Body of pancreas (tissue), 4 donors: ENCODE measurements at regions of chr2 and their contacts with region 1.

Region 1: DNA sequence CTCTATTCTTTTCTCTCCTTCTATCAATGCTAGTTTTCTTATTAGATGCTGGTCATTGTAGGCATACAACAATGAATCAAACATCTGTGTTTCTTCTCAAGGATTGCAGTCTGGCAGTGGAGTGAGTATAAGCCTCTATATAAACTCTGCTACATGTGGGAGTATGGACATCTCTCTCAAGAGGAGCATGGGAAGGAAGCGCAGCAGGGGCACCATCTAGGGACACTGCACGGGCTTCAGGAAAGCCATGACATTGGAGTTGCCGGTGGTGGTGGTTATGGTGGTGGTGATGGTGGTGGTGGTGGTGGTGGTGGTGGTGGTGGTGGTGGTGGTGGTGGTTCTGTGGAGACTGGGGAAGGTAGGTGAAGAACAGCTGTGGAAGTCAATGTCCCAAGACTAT is 462.6 kb downstream of the RNF144A start:
- DNase-seq: peak in 3 of 4 donors; percentile 43 to 81 (median 48)
- ATAC-seq: no peak
- H3K4me3 ChIP-seq: no peak overlapping the region
- H3K27ac ChIP-seq: no peak overlapping the region
- H3K4me1 ChIP-seq: peaks cover 12% of the 10 kb centered on the region
- H3K27me3 ChIP-seq: no peaks in the 10 kb centered on the region
- CTCF ChIP-seq: peak in 3 of 7 experiments; percentile 33 to 66 (median 41)
- POLR2A ChIP-seq: no peak

Region 2: DNA sequence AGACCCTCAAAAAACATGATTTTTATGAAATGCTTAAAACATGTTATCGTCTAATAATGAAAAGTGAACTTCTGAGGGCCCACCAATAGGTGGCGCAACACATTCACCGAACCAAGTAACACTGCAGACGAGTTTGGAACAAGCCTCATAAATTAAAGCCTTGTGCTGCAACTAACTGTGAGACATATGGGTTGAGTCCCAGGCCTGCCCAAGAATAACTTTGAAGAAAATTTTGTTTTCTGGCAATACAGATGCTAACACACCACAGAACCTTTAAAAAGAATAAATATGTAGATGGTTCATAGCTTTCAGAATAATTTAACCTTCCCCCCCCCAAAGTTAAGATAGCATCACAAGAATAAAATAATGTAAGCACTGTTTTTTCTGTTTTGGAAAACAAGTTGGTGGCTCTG is 176.7 kb before region 1 on chr2:
- intact Hi-C with region 1: loop called (anchors 10 kb)
- DNase-seq: peak; percentile 55 to 68 (median 60)
- ATAC-seq: peak; percentile 65
- H3K4me3 ChIP-seq: no peak overlapping the region
- H3K27ac ChIP-seq: no peak overlapping the region
- H3K4me1 ChIP-seq: no peaks in the 10 kb centered on the region
- H3K27me3 ChIP-seq: no peaks in the 10 kb centered on the region
- CTCF ChIP-seq: peak; percentile 72 to 90 (median 84)
- POLR2A ChIP-seq: no peak